ENCODE measurements at regions of chr3 and their contacts with region 1.

Region 1: GRCh38 chr3:138594150-138594934 is at the start of gene CEP70:
- DNase-seq: peak; percentile 90 to 93 (median 92)
- H3K4me3 ChIP-seq: peak within 1 kb of the TSS; percentile 94 to 99
- H3K4me3 Mint-ChIP-seq: peak within 1 kb of the TSS; percentile 85 to 97 (median 92)
- H3K27ac ChIP-seq: peak within 1 kb of the TSS; percentile 75
- H3K27ac Mint-ChIP-seq: peak within 1 kb of the TSS; percentile 89 to 100 (median 97)
- H3K4me1 ChIP-seq: peaks cover 5% of the 10 kb centered on the region
- H3K4me1 Mint-ChIP-seq: peaks cover 6 to 12% (median 9%) of the 10 kb centered on the region in 4 donors
- H3K27me3 ChIP-seq: no peaks in the 10 kb centered on the region
- H3K27me3 Mint-ChIP-seq: no peaks in the 10 kb centered on the region
- total RNA-seq, gene CEP70: 27.1 to 28.0 TPM

Region 2: DNA sequence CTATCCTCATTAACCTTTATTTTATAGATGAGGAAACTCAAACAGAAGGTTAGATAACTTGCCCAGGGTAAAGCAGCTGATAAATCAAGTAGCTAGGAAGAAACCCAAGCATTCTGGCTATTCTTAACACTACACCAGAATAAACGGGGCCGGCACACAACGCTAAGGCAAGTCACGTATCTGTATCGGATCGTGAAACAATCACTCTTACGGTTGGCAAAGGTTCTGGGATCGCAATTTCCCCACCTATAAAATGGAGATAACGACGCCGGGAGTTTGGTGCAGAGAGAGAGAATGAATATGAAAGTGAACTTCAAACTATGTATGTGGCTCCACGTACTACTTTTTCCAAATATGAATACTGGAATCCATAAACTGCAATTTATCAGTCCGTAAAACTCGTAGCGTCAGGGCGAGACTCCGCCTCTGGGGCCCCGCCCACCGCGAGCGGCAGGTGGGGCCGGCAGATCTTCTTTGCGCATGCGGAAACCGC is 407.5 kb before region 1 on chr3:
- CTCF ChIA-PET with region 1: no interaction called
- POLR2A ChIA-PET with region 1: interaction called, 3 read pairs
- intact Hi-C with region 1: loop called (anchors 5 kb)
- DNase-seq: peak; percentile 88 to 90 (median 89)
- H3K4me3 ChIP-seq: peak overlapping the region; percentile 94 to 97
- H3K4me3 Mint-ChIP-seq: peak overlapping the region; percentile 94 to 99 (median 97)
- H3K27ac ChIP-seq: peak overlapping the region; percentile 87
- H3K27ac Mint-ChIP-seq: peak overlapping the region; percentile 90 to 98 (median 96)
- H3K4me1 ChIP-seq: peaks cover 42% of the 10 kb centered on the region
- H3K4me1 Mint-ChIP-seq: peaks cover 30 to 51% (median 40%) of the 10 kb centered on the region in 4 donors
- H3K27me3 ChIP-seq: no peaks in the 10 kb centered on the region
- H3K27me3 Mint-ChIP-seq: peaks cover 0 to 2% of the 10 kb centered on the region in 2 donors

Region 3: DNA sequence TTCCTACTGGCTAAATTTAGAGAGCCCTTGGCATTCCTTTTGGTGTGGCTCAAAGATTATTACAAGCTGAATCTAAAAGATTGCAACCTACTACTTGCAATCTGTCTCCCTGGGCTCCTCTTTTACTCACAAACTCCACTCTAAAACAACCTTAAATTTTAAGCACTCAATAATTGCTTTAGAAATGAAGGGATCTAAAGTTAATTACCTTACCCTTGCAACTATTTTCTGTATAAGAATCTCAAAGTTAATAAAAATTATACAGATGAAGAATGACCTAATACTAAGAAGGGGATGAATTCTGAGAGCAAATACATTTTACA is 99.8 kb before region 1 on chr3:
- CTCF ChIA-PET with region 1: no interaction called
- POLR2A ChIA-PET with region 1: no interaction called
- intact Hi-C with region 1: no loop called
- DNase-seq: no peak
- H3K4me3 ChIP-seq: no peak overlapping the region
- H3K4me3 Mint-ChIP-seq: no peak overlapping the region
- H3K27ac ChIP-seq: no peak overlapping the region
- H3K27ac Mint-ChIP-seq: no peak overlapping the region
- H3K4me1 ChIP-seq: no peaks in the 10 kb centered on the region
- H3K4me1 Mint-ChIP-seq: no peaks in the 10 kb centered on the region
- H3K27me3 ChIP-seq: no peaks in the 10 kb centered on the region
- H3K27me3 Mint-ChIP-seq: no peaks in the 10 kb centered on the region

Region 4: GRCh38 chr3:138547342-138547975 is 46.9 kb before region 1 on chr3:
- CTCF ChIA-PET with region 1: no interaction called
- POLR2A ChIA-PET with region 1: no interaction called
- intact Hi-C with region 1: no loop called
- DNase-seq: no peak
- H3K4me3 ChIP-seq: no peak overlapping the region
- H3K4me3 Mint-ChIP-seq: no peak overlapping the region
- H3K27ac ChIP-seq: no peak overlapping the region
- H3K27ac Mint-ChIP-seq: no peak overlapping the region
- H3K4me1 ChIP-seq: no peaks in the 10 kb centered on the region
- H3K4me1 Mint-ChIP-seq: no peaks in the 10 kb centered on the region
- H3K27me3 ChIP-seq: no peaks in the 10 kb centered on the region
- H3K27me3 Mint-ChIP-seq: no peaks in the 10 kb centered on the region

Region 5: DNA sequence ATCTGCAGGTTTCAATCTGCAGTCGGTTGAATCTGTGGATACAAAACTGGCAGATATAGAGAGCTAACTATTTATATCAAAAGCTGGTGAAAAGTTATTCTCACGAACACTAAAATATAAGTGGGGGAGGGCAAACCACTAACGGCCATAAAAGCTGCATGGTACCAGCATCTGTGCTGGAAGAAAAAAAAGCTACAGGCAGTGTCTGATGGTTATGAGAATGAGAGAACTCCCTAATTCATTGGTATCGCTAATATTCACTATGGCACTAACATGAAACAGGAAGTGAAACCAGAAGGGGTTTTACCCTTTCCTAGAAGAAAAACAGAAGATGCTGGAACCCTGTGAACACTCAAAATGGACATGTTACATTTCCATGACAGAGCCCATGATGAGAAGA is 16.2 kb before region 1 on chr3:
- CTCF ChIA-PET with region 1: interaction called, 15 read pairs
- POLR2A ChIA-PET with region 1: interaction called, 5 read pairs
- intact Hi-C with region 1: no loop called
- DNase-seq: no peak
- H3K4me3 ChIP-seq: no peak overlapping the region
- H3K4me3 Mint-ChIP-seq: peak overlapping the region; percentile 40 to 78 (median 73)
- H3K27ac ChIP-seq: no peak overlapping the region
- H3K27ac Mint-ChIP-seq: peak overlapping the region in 6 of 7 donors; percentile 14 to 77 (median 60)
- H3K4me1 ChIP-seq: peaks cover 13% of the 10 kb centered on the region
- H3K4me1 Mint-ChIP-seq: peaks cover 11 to 27% (median 20%) of the 10 kb centered on the region in 4 donors
- H3K27me3 ChIP-seq: no peaks in the 10 kb centered on the region
- H3K27me3 Mint-ChIP-seq: no peaks in the 10 kb centered on the region

Region 6: DNA sequence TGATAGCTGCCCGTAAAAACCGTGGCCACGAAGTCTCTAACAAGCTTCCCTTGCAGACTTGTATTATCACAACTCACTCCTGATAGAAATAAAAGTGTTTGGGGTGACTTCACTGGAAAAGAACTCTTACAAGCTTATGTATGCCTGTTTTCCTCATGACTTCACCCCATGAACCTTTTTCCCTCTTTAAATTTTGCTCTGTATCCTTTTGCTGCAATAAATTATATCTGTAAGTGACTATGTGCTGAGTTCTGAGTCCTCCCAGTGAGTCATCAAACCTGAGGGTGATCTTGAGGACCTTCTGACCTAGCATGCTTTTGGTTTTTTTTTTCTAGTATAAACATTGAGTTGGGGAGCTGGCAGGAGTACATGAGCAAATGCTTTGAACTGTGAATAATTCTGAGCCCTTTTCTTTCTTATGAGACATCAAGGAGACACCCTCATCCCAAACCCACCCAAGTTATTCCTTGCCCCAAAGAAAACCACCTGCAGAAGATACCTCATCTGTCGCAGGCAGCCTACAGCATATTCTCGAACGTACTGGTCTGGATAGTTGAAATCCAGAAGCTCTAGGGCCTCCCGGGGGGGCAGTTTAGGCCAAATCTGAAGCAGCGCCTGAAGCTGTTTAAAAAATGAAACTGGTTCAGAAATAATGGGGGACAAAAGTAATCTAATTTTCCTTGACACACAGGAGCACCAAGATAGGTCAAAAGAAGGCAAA is 100.1 kb after region 1 on chr3:
- CTCF ChIA-PET with region 1: interaction called, 12 read pairs
- POLR2A ChIA-PET with region 1: no interaction called
- intact Hi-C with region 1: loop called (anchors 1 kb)
- DNase-seq: no peak
- H3K4me3 ChIP-seq: no peak overlapping the region
- H3K4me3 Mint-ChIP-seq: no peak overlapping the region
- H3K27ac ChIP-seq: no peak overlapping the region
- H3K27ac Mint-ChIP-seq: peak overlapping the region in 1 of 7 donors; percentile 41
- H3K4me1 ChIP-seq: no peaks in the 10 kb centered on the region
- H3K4me1 Mint-ChIP-seq: no peaks in the 10 kb centered on the region
- H3K27me3 ChIP-seq: no peaks in the 10 kb centered on the region
- H3K27me3 Mint-ChIP-seq: no peaks in the 10 kb centered on the region

Region 7: DNA sequence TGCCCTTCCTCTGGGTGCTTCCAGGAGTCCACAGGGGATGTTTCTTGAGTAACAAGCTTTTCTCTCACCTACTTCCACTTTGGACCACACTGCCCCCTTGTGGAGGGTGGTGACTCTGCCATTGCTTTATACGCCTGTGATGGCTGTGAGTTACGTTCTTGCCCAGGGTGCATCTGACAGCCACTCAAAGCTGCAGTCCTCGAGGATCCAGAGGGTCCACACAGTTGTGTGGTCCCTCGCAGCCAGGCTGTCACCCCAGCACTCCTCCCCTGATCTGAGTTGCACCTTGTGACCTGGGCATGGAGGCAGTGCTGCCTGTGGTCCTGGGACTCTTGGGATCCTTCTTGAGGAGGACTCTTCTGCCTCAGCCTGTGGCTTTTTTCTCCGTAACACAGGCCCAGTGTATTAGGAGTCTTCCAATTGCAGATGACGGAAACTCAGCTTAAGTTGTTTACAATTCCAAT is 329.2 kb after region 1 on chr3:
- CTCF ChIA-PET with region 1: interaction called, 455 read pairs
- POLR2A ChIA-PET with region 1: interaction called, 3 read pairs
- intact Hi-C with region 1: loop called (anchors 1 kb)
- DNase-seq: peak; percentile 73 to 79 (median 78)
- H3K4me3 ChIP-seq: no peak overlapping the region
- H3K4me3 Mint-ChIP-seq: peak overlapping the region in 1 of 8 donors; percentile 53
- H3K27ac ChIP-seq: no peak overlapping the region
- H3K27ac Mint-ChIP-seq: peak overlapping the region in 1 of 7 donors; percentile 7
- H3K4me1 ChIP-seq: no peaks in the 10 kb centered on the region
- H3K4me1 Mint-ChIP-seq: peaks cover 0 to 1% (median under 1%) of the 10 kb centered on the region in 4 donors
- H3K27me3 ChIP-seq: peaks cover 3% of the 10 kb centered on the region
- H3K27me3 Mint-ChIP-seq: peaks cover 4 to 11% of the 10 kb centered on the region in 2 donors

Region 8: DNA sequence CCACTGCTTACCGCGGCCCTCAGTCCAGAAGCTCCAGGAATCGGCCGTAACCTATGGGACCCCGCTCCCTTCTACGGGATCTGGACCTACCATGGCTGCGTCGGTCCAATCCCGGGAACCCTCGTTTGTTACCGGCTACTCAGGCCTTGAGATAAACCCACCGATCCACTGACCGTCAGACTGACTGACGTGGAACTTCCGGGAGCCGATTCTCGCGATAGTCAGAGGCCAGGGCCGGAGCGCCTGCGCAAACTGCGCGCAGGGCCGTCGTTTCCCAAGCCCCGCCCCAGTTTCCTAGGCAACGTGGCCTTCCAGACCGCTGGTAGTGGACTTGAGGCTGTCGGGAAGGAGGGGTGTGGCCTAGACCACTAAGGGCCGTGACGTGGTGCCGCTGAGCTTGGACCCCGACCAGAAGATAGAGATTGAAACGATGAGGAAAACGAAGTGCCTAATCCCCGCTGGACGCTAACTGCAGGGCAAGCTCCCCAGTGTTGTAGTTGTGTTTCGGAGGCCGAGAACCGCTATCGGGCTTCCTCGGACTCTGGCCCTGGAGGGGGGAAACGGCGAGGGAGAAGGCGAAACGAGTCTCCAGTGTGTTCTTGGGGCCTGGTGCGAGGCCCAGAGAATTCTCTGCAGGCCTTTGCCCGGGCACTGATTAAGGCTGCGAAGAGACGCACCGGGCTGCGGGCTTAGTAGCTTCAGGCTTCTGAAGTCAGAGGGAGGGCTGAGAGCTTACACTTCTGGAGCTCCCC is 795.3 kb after region 1 on chr3 and contains the start of gene COPB2:
- CTCF ChIA-PET with region 1: no interaction called
- POLR2A ChIA-PET with region 1: interaction called, 4 read pairs
- intact Hi-C with region 1: loop called (anchors 5 kb)
- DNase-seq: peak; percentile 91 to 94 (median 92)
- H3K4me3 ChIP-seq: peak within 1 kb of the TSS; percentile 92 to 97
- H3K4me3 Mint-ChIP-seq: peak within 1 kb of the TSS; percentile 92 to 99 (median 98)
- H3K27ac ChIP-seq: peak within 1 kb of the TSS; percentile 93
- H3K27ac Mint-ChIP-seq: peak within 1 kb of the TSS; percentile 96 to 100 (median 100)
- H3K4me1 ChIP-seq: peaks cover 34% of the 10 kb centered on the region
- H3K4me1 Mint-ChIP-seq: peaks cover 30 to 50% (median 41%) of the 10 kb centered on the region in 4 donors
- H3K27me3 ChIP-seq: no peaks in the 10 kb centered on the region
- H3K27me3 Mint-ChIP-seq: no peaks in the 10 kb centered on the region
- total RNA-seq, gene COPB2: 78.1 to 79.8 TPM

Measured in CD4-positive, alpha-beta memory T cell (primary cell).